ENCODE measurements at regions of chr9 and their contacts with region 1.

Region 1: DNA sequence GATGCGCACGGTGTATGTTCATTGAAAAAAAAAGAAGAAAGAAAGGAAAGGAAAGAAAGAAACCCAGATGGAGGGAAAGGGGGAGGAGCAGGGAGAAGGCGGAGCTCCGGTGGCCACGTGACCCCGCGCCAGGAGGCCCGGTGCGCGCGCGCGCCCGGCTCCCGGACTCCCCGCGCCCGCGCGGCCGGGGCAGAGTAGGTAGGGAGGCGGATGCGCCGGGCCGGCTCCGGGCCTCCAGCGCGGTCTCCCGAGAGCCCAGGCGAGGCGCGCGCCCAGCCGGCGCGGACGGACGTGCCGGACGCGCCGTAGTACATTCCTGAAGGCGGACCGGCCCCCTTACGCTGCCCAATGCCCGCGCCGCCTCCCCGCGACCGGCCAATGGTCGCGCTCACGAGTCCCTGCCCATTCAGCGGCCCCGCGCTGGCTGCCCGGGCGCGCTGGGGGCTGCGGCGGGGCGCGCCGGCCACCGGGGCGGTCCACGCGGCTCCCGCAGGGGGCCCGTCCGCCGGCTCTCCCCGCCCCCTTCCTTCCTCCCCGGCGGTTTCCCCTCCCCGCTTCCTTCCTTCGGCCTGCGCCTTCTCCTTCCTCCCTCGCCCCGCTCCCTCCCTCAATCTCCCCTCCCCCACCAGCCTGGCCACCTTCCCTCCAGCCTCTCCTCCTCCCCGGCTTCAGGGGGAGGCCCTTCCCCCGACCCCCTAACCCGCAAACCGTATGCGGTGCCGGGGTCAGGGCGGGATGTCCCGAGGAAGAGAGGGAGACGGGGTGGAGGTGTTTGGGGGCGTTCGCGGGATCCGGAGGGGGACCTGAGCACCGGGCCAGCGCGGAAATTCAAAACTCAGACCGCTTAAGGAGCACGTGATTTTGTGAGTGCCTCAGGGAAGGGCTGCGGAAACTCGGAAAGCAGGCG is 5.8 kb downstream of the PTCH1 start:
- DNase-seq: peak; percentile 91
- H3K4me3 Mint-ChIP-seq: peak overlapping the region; percentile 88
- H3K27ac Mint-ChIP-seq: peak overlapping the region; percentile 88
- H3K4me1 Mint-ChIP-seq: peaks cover 32% of the 10 kb centered on the region
- H3K27me3 Mint-ChIP-seq: peaks cover 19% of the 10 kb centered on the region

Region 2: DNA sequence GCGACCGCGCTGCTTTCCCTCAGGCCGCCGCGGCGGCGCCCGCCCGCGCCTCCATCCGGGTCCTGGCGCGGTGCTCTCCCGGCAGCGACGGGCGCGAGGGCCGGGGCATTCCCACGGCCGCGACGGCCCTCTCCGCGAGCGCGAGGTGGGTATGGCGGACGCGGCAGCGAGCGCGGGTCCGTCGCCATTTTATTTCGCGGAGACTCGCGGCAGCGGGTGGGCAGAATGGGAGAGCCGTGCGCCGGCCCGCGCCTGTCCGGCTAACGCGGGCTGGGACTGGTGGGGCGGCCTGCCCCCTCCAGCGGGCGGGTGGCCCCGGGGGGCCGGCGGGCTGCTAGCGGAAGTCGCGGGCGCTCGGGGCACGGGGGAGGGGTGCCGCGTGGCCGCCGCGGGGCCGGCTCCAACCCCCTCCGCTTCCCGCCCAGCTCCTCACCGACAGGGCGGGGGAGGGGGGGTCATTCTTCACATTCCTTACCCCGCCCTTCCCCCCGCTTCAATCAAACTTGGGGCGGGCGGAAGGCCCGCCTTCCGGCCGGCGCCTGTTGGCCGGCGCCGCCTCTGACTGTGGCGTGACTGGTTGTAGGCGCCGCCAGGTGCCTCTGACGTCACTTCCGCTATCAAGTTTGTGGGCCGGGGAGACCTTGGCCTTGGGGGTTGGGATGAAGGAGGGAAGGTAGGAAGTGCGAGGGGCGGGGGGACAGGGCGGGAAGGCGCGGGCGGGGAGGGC is 1344.6 kb before region 1 on chr9:
- CTCF ChIA-PET with region 1: no interaction called
- POLR2A ChIA-PET with region 1: no interaction called
- intact Hi-C with region 1: loop called (anchors 10 kb)
- DNase-seq: peak; percentile 97
- H3K4me3 Mint-ChIP-seq: peak overlapping the region; percentile 81
- H3K27ac Mint-ChIP-seq: peak overlapping the region; percentile 81
- H3K4me1 Mint-ChIP-seq: peaks cover 43% of the 10 kb centered on the region
- H3K27me3 Mint-ChIP-seq: no peaks in the 10 kb centered on the region

Region 3: GRCh38 chr9:95317119-95317892 is 193.7 kb before region 1 on chr9 and contains the start of gene FANCC:
- CTCF ChIA-PET with region 1: no interaction called
- POLR2A ChIA-PET with region 1: interaction called, 3 read pairs
- intact Hi-C with region 1: loop called (anchors 10 kb)
- DNase-seq: peak; percentile 89
- H3K4me3 Mint-ChIP-seq: peak within 1 kb of the TSS; percentile 89
- H3K27ac Mint-ChIP-seq: peak within 1 kb of the TSS; percentile 86
- H3K4me1 Mint-ChIP-seq: peaks cover 8% of the 10 kb centered on the region
- H3K27me3 Mint-ChIP-seq: no peaks in the 10 kb centered on the region
- total RNA-seq, gene FANCC: 10.2 to 10.5 TPM

Region 4: DNA sequence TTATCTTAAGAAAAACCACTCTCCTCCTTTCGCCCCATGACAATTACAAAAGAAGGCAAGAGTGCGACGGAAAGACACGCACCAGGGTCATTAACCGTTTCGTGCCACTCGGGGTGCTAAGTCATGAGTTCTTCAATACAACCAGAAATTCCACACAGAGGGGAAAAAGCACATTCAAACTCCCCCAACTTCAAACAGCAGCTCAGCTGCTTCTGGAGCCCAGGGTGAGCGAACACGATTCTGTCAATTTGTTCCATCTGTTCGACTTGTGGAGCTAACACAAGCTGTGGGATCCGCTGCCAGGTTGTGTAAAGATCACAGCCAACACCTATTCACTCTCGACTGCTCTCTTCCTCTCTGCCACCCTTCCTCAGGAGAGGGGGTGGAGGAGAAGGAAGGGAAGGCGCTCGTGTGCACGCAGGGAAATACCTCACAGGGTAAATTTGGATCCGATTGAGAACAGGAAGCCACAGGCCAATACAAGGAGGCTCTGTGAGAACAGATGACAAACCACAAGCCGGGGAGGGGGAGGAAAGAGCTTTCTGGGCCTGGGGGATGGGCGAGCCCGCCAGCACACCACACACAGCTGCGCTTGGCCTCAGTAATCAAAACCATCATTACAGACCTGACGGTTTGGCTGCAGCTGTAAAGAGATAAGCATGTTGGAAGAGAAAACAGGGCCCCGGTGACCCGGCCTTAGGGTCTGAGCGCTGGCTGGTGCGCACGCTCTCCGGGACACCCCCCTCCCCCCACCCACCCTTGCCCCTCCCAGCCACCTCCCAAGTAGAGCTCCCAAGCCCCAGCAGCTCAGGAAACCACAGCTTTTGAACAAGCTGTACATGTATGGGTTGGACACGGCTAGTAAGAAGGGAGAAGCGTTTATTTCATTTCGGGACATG is 48.5 kb before region 1 on chr9:
- CTCF ChIA-PET with region 1: no interaction called
- POLR2A ChIA-PET with region 1: no interaction called
- intact Hi-C with region 1: loop called (anchors 2 kb)
- DNase-seq: peak; percentile 88
- H3K4me3 Mint-ChIP-seq: peak overlapping the region; percentile 75
- H3K27ac Mint-ChIP-seq: peak overlapping the region; percentile 69
- H3K4me1 Mint-ChIP-seq: peaks cover 24% of the 10 kb centered on the region
- H3K27me3 Mint-ChIP-seq: no peaks in the 10 kb centered on the region

Region 5: GRCh38 chr9:95875305-95876137 is 364.6 kb after region 1 on chr9 and contains the start of gene ERCC6L2:
- CTCF ChIA-PET with region 1: no interaction called
- POLR2A ChIA-PET with region 1: no interaction called
- intact Hi-C with region 1: loop called (anchors 2 kb)
- DNase-seq: peak; percentile 97
- H3K4me3 Mint-ChIP-seq: no peak within 1 kb of the TSS
- H3K27ac Mint-ChIP-seq: no peak within 1 kb of the TSS
- H3K4me1 Mint-ChIP-seq: peaks cover 28% of the 10 kb centered on the region
- H3K27me3 Mint-ChIP-seq: no peaks in the 10 kb centered on the region
- total RNA-seq, gene ERCC6L2: 23.1 to 25.1 TPM